SK-N-SH (cell line): ENCODE measurements at regions of chr3 and their contacts with region 1.

Region 1: DNA sequence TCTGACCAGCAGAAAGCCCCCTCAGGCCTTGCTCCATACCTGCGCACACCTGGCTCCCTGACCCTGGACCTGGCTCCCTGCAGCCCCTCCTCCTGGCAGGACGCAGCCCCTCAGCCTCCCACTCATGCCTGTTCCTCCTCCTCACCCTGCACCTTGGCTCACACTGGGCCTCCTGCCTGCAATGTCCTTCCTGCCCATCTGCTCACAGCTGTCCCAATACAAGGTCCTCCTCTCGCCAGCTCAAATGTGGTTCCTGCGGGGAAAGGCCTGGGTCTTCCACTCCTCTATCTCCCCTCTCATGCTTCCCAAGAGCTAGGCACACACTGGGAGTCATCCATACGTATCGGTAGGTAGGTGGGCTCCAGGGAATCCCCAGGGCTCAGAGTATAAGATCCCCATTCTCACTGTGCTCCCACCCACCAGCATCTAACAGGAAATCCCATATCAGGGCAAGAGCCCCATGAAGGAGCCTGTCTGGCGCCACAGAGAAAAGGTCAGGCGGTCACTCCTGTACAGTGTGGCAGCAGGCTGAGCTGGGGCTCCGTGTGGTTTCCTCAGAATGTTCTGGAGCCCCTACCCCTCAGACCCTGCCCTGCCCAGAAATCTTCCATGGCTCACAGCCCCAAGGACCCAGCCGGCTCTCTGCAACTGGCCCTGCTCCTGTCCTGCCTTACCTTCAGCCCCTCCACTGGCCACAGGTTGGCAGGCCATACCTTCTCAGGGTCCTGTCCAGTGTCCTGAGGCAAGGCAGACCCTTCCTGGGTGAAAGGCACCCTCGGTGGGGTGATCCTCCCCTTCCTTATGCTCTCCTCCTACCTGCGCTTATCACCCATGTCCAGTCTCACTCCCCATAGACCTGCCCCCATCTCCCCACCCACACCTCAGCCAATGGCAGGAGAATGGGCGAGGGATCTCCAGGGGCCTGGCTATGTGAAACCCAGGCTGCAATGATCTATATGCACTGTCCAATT is 10.9 kb downstream of the PLCD1 start:
- DNase-seq: no peak
- H3K4me3 ChIP-seq: no peak overlapping the region
- H3K27ac ChIP-seq: peak overlapping the region in 1 of 2 experiments; percentile 39; a peak in 1 of 4 replicates
- H3K4me1 ChIP-seq: peaks cover 0 to 38% of the 10 kb centered on the region in 2 experiments; a peak in 1 of 4 replicates
- H3K27me3 ChIP-seq: no peaks in the 10 kb centered on the region
- CTCF ChIP-seq: no peak
- EP300 ChIP-seq: no peak
- RAD21 ChIP-seq: no peak

Region 2: GRCh38 chr3:38004415-38005076 is 14.0 kb before region 1 on chr3:
- CTCF ChIA-PET with region 1: interaction called, 27 read pairs
- POLR2A ChIA-PET with region 1: no interaction called
- DNase-seq: peak; percentile 71
- H3K4me3 ChIP-seq: no peak overlapping the region; a peak in 1 of 4 replicates
- H3K27ac ChIP-seq: no peak overlapping the region
- H3K4me1 ChIP-seq: no peaks in the 10 kb centered on the region; a peak in 1 of 4 replicates
- H3K27me3 ChIP-seq: no peaks in the 10 kb centered on the region
- CTCF ChIP-seq: peak; percentile 62
- EP300 ChIP-seq: no peak
- RAD21 ChIP-seq: peak; percentile 64

Region 3: GRCh38 chr3:38136777-38137614 is 118.4 kb after region 1 on chr3 and contains the start of gene ACAA1:
- CTCF ChIA-PET with region 1: no interaction called
- POLR2A ChIA-PET with region 1: no interaction called
- DNase-seq: peak; percentile 98
- H3K4me3 ChIP-seq: peak within 1 kb of the TSS; percentile 89 to 94
- H3K27ac ChIP-seq: peak within 1 kb of the TSS; percentile 89 to 91
- H3K4me1 ChIP-seq: peaks cover 16 to 31% of the 10 kb centered on the region in 2 experiments; a peak in 2 of 4 replicates
- H3K27me3 ChIP-seq: no peaks in the 10 kb centered on the region
- CTCF ChIP-seq: no peak
- EP300 ChIP-seq: no peak
- RAD21 ChIP-seq: no peak
- polyA plus RNA-seq, gene ACAA1: 86.4 and 101 TPM in 2 replicates